Mammary epithelial cell (primary cell): ENCODE measurements at regions of chr12 and their contacts with region 1.

Region 1: GRCh38 chr12:75784591-75784990 is 247.0 kb downstream of the PHLDA1 start:
- DNase-seq: peak; percentile 91
- H3K4me3 ChIP-seq: no peak overlapping the region
- H3K27ac ChIP-seq: peak overlapping the region; percentile 2
- H3K4me1 ChIP-seq: peaks cover 56% of the 10 kb centered on the region
- H3K27me3 ChIP-seq: no peaks in the 10 kb centered on the region
- CTCF ChIP-seq: no peak

Region 2: DNA sequence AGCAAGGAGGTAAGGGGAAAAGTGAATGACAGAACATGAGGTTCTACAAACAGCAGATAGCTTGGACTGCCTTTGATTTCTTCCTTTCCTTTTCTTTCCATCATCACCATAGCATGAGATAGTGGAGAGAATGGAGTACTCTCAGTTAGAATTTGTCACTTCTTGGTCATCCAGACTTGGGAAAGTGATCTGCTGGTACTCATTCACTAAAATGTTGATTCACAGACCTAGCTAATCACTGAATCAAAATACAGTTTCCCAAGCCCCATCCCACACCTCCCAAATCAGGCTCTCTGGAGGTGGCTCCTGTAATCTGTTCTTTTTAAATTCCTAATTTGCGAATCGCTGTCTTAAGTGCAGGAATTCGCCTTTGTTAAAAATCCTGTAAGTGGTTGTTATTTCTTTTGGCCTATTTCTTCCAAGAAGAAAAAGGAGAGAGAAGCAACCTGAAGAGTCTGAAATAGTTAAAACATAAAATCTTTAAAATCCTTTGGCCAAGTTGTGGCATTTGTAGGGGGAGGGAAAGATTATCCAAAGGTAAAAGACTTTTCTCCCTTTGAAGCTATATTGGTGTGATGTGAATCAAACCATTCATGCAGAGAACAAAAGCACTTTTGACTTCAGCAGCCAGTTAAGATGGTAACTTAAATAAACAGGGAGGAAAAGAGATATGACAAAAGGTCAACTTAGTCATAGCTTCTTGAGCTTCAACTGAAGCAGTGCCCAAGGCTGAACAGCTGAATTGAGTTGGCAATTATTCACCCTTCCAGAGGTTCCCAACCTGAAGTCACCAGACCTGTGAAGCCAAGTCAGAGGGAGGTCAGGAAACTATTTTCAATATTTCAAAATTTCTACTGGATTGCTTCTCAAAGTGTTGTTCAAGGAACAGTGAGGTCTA is 18.1 kb before region 1 on chr12:
- CTCF ChIA-PET with region 1: no interaction called
- dilution Hi-C with region 1: no loop called
- in situ Hi-C with region 1: no loop called
- intact Hi-C with region 1: loop called (anchors 2 kb)
- DNase-seq: peak; percentile 95
- H3K4me3 ChIP-seq: no peak overlapping the region
- H3K27ac ChIP-seq: peak overlapping the region; percentile 63
- H3K4me1 ChIP-seq: peaks cover 27% of the 10 kb centered on the region
- H3K27me3 ChIP-seq: no peaks in the 10 kb centered on the region
- CTCF ChIP-seq: no peak